ENCODE measurements at regions of chr10 and their contacts with region 1.

Region 1: DNA sequence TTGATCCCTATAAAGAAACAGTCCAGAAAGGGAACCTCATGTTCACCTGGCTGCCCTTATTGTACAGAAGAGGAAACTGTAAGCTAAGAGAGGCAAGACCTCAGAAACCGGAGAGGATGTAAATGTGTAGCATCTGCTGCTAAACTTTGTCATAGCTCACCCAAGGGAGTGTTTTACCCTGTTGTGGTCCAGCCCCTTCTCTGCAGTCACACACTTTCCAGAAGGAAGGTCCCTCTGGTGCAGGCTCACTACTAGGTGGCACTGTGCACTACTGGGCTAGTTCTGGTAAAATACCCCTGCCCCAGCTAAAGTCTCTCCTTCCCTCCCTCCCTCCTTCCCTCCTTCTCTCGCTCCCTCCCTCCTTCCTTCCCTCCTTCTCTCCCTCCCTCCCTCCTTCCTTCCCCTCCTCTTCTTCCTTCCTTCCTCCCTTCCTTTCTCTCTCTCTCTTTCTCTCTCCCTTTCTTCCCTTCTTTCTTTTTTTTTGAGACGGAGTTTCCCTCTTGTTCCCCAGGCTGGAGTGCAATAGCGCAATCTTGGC is 42.5 kb upstream of the LCOR start:
- DNase-seq: peak; percentile 56
- H3K4me3 Mint-ChIP-seq: no peak overlapping the region
- H3K27ac Mint-ChIP-seq: no peak overlapping the region
- H3K4me1 Mint-ChIP-seq: peaks cover 1% of the 10 kb centered on the region
- H3K27me3 Mint-ChIP-seq: peaks cover 23% of the 10 kb centered on the region
- CTCF ChIP-seq: peak; percentile 52

Region 2: GRCh38 chr10:96772194-96772593 is 17.4 kb before region 1 on chr10:
- CTCF ChIA-PET with region 1: interaction called, 20 read pairs
- POLR2A ChIA-PET with region 1: interaction called, 3 read pairs
- intact Hi-C with region 1: no loop called
- DNase-seq: no peak
- H3K4me3 Mint-ChIP-seq: no peak overlapping the region
- H3K27ac Mint-ChIP-seq: no peak overlapping the region
- H3K4me1 Mint-ChIP-seq: no peaks in the 10 kb centered on the region
- H3K27me3 Mint-ChIP-seq: no peaks in the 10 kb centered on the region
- CTCF ChIP-seq: no peak

Region 3: GRCh38 chr10:96826438-96826837 is 36.8 kb after region 1 on chr10:
- CTCF ChIA-PET with region 1: interaction called, 17 read pairs
- POLR2A ChIA-PET with region 1: no interaction called
- intact Hi-C with region 1: loop called (anchors 1 kb)
- DNase-seq: no peak
- H3K4me3 Mint-ChIP-seq: no peak overlapping the region
- H3K27ac Mint-ChIP-seq: no peak overlapping the region
- H3K4me1 Mint-ChIP-seq: peaks cover 5% of the 10 kb centered on the region
- H3K27me3 Mint-ChIP-seq: no peaks in the 10 kb centered on the region
- CTCF ChIP-seq: no peak

Region 4: GRCh38 chr10:97157578-97158095 is 368.0 kb after region 1 on chr10:
- CTCF ChIA-PET with region 1: no interaction called
- POLR2A ChIA-PET with region 1: no interaction called
- intact Hi-C with region 1: no loop called
- DNase-seq: no peak
- H3K4me3 Mint-ChIP-seq: no peak overlapping the region
- H3K27ac Mint-ChIP-seq: no peak overlapping the region
- H3K4me1 Mint-ChIP-seq: no peaks in the 10 kb centered on the region
- H3K27me3 Mint-ChIP-seq: peaks cover 27% of the 10 kb centered on the region
- CTCF ChIP-seq: no peak